Adrenal gland (tissue), 19 donors: ENCODE measurements at regions of chr2 and their contacts with region 1.

Region 1: DNA sequence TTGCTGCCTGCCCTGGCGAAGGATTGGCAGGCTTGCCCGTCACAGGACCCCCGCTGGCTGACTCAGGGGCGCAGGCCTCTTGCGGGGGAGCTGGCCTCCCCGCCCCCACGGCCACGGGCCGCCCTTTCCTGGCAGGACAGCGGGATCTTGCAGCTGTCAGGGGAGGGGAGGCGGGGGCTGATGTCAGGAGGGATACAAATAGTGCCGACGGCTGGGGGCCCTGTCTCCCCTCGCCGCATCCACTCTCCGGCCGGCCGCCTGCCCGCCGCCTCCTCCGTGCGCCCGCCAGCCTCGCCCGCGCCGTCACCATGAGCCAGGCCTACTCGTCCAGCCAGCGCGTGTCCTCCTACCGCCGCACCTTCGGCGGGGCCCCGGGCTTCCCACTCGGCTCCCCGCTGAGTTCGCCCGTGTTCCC is at the start of gene DES:
- DNase-seq: no peak
- H3K4me3 ChIP-seq: no peak within 1 kb of the TSS
- H3K27ac ChIP-seq: no peak within 1 kb of the TSS
- H3K4me1 ChIP-seq: no peaks in the 10 kb centered on the region
- H3K27me3 ChIP-seq: peaks cover 16% of the 10 kb centered on the region
- CTCF ChIP-seq: no peak
- POLR2A ChIP-seq: no peak
- total RNA-seq, gene DES: 0.94 to 46.5 (median 7.9) TPM

Region 2: DNA sequence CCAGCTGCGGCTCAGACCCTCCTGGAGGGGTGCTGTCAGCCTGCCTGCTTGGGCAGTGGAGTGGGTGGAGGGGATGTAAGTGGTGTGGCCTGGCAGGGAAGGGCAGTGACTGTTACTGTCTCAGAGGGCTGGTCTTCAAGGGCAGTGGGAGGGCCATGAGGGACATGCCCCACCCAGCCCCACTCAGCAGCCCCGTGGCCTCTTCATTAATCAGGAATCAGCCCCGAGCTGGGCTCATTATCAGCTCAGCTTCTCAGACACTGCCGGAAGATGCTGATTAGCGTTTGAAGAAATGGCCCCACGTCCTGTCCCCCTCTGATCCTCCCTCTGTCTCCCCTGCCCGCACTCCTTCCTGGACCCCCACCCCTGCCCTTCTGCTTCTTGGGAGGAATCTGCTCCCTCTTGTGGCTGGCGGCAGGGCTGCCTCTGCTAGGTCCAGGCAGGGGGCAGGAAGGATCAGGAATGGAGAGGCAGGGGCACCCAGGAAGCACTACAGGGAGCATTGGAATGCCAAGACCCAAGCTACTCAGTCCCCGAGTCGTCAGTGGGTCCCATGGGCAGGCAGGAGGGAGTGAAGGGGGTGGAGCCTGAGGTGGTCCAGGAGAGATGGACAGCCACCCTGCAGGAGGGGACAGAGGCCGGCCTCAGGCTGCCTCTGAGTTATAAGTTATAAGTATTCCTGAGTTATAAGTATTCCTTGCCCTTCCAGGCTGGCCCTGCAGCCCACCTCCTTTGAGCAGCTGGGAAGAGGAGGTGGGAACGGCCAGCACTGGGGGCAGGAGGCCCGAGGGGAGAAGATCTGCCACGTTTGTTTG is 103.1 kb after region 1 on chr2:
- intact Hi-C with region 1: no loop called
- DNase-seq: peak in 5 of 7 donors; percentile 38 to 75 (median 54)
- H3K4me3 ChIP-seq: peak overlapping the region in 1 of 4 donors; percentile 26
- H3K27ac ChIP-seq: peak overlapping the region in 1 of 5 donors; percentile 57
- H3K4me1 ChIP-seq: peaks cover 0 to 26% of the 10 kb centered on the region in 2 donors
- H3K27me3 ChIP-seq: peaks cover 52% of the 10 kb centered on the region
- CTCF ChIP-seq: peak; percentile 43 to 65 (median 58)
- POLR2A ChIP-seq: no peak

Region 3: DNA sequence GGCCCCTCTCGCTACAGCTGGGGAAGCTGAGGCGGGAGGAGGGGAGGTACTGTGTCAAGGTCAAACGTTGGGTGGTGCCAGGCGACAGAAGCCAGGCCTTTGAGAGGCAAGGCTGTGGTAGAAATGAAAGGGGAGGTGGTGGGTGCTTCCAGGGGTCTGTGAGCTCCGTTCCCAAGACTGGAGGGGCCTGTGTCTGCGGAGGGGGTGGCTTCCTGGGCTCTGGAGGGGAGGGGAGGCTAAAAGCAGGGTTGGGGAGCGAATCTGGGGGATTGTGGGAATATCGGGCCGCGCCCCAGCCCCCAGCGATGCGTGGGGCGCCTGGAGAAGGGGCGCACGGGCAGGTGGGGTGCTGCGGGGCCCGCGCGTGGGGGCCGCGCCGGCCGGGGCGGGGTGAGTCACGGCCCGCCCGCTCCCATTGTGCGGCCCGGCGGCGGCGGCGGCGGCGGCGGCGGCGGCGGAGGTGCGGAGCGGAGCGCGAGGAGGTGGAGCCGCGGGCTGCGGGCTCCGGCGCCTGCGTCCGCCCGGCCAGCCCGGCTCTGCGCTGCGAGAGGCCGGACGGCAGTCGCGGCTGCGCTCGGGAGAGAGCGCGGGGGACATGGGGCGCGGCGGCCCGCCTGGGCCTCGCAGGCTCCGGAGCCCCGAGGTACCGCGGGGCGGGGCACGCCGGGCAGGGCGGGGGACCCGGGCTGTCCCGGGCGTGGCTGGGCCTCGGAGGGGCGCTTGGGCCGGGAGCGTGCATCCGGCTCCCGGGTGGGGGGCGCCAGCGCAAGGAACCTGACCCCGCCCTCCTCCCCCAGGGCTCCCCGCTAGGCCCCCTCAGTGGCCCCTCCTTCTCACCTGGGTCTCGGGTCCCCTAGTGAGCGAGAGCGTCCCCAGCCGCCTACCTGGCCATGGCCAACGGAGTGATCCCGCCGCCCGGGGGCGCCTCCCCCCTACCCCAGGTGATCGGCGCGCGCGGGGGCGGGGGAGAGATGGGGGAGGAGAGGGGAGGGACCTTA is 209.2 kb after region 1 on chr2 and contains the start of gene SLC4A3:
- intact Hi-C with region 1: loop called in 1 of 2 experiments (anchors 5 kb)
- DNase-seq: peak in 2 of 7 donors; percentile 42 to 51
- H3K4me3 ChIP-seq: peak within 1 kb of the TSS in 2 of 4 donors; percentile 9 to 62
- H3K27ac ChIP-seq: peak within 1 kb of the TSS in 2 of 5 donors; percentile 30 to 63
- H3K4me1 ChIP-seq: peaks cover 9 to 28% of the 10 kb centered on the region in 2 donors
- H3K27me3 ChIP-seq: no peaks in the 10 kb centered on the region
- CTCF ChIP-seq: no peak
- POLR2A ChIP-seq: peak; percentile 19 to 38
- total RNA-seq, gene SLC4A3: 3.9 to 32.8 (median 13.8) TPM